Dorsolateral prefrontal cortex (tissue), 120 donors: ENCODE measurements at regions of chr11 and their contacts with region 1.

Region 1: GRCh38 chr11:113603277-113604059 is 102.6 kb downstream of the TMPRSS5 start:
- DNase-seq: peak in 9 of 10 donors; percentile 33 to 78 (median 68)
- H3K4me3 ChIP-seq: peak overlapping the region in 1 of 59 donors; percentile 20
- H3K27ac ChIP-seq: peak overlapping the region in 4 of 59 donors; percentile 22 to 75 (median 44)
- H3K27me3 ChIP-seq: no peaks in the 10 kb centered on the region
- CTCF ChIP-seq: peak in 1 of 56 donors; percentile 13

Region 2: GRCh38 chr11:113213549-113213948 is 389.9 kb before region 1 on chr11:
- intact Hi-C with region 1: no loop called
- DNase-seq: no peak
- H3K4me3 ChIP-seq: no peak overlapping the region
- H3K27ac ChIP-seq: peak overlapping the region in 2 of 59 donors; percentile 23 to 37
- H3K27me3 ChIP-seq: no peaks in the 10 kb centered on the region
- CTCF ChIP-seq: no peak

Region 3: DNA sequence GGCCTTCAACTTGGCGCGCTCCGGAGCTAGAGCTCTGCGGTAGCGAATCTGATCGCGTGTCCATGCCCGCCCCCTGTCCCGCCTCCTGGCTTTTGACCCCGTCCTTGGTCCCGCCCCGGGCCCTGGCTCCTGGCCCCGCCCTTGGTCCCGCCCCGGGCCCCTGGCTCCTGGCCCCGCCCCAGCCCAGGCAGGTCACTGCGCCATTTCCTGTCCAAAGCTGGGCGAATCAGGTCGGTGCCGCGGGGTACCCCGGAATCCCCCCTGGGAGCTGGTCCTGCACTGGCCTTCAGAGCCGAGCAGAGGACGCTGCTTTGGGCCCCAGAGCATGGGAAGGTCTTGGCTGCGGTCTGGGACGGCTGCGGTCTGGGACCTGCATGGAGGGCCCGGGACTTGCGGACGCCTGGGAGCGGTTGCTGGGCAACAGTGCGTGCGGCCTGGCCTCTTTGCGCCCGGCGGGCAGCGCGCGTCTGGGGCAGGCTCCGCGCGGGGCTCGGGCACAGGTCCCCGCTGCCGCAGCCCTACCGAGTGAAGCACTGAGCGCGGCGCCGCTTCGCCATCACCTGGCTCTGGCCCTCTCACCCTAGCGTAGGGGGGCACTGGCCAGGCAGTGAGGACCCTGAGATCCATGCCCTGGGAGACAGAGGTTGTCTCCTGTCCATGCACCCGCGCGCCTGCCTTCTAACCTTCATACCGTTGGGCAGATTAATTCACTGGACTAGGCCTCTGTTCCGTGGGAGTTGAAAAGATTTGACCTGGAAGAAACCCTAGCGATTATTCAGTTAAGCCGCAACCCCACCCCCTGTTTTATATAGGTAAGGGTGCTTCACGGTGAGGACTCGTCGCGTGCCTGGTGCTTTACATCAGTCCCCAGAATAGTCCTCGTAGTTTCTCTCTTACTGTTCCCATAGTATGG is 288.8 kb before region 1 on chr11 and contains the start of gene TTC12:
- intact Hi-C with region 1: loop called in 1 of 2 experiments (anchors 5 kb)
- DNase-seq: peak; percentile 88 to 95 (median 92)
- H3K4me3 ChIP-seq: peak within 1 kb of the TSS; percentile 40 to 92 (median 76)
- H3K27ac ChIP-seq: peak within 1 kb of the TSS in 56 of 59 donors; percentile 20 to 92 (median 81)
- H3K27me3 ChIP-seq: no peaks in the 10 kb centered on the region
- CTCF ChIP-seq: peak in 28 of 56 donors; percentile 5 to 61 (median 30)
- total RNA-seq, gene TTC12: 4.3 to 31.8 (median 14.8) TPM

Region 4: DNA sequence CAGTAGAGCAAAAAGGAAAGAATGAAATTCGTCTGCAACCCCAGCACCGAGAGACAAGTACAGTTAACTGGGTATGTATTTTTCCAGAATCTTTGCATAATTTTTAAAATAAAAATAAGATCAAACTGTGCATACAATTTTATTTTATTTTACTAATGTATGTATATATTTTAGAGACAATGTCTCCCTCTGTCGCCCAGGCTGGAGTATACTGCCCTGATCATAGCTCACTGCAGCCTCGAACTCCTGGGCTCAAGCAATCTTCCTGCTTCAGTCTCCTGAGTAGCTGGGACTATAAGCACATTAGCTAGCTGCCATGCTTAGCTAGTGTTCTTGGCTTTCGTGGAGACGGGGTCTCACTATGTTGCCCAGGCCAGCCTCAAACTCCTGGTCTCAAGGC is 109.4 kb before region 1 on chr11:
- intact Hi-C with region 1: no loop called
- DNase-seq: no peak
- H3K4me3 ChIP-seq: no peak overlapping the region
- H3K27ac ChIP-seq: no peak overlapping the region
- H3K27me3 ChIP-seq: peaks cover 0 to 5% (median 0%) of the 10 kb centered on the region in 45 donors
- CTCF ChIP-seq: peak in 3 of 56 donors; percentile 16 to 25 (median 19)

Region 5: GRCh38 chr11:113705871-113706655 is 102.6 kb after region 1 on chr11 and contains the start of gene TMPRSS5:
- intact Hi-C with region 1: loop called (anchors 2 to 10 kb)
- DNase-seq: peak; percentile 30 to 93 (median 87)
- H3K4me3 ChIP-seq: peak within 1 kb of the TSS in 48 of 59 donors; percentile 5 to 65 (median 32)
- H3K27ac ChIP-seq: peak within 1 kb of the TSS in 57 of 59 donors; percentile 7 to 94 (median 78)
- H3K27me3 ChIP-seq: no peaks in the 10 kb centered on the region
- CTCF ChIP-seq: peak in 7 of 56 donors; percentile 6 to 38 (median 11)
- total RNA-seq, gene TMPRSS5: 5.8 to 117 (median 15.1) TPM